Activated B cell treated with CpG ODN at 0.5 μM for 24 hours (primary cell): ENCODE measurements at regions of chr12 and their contacts with region 1.

Region 1: DNA sequence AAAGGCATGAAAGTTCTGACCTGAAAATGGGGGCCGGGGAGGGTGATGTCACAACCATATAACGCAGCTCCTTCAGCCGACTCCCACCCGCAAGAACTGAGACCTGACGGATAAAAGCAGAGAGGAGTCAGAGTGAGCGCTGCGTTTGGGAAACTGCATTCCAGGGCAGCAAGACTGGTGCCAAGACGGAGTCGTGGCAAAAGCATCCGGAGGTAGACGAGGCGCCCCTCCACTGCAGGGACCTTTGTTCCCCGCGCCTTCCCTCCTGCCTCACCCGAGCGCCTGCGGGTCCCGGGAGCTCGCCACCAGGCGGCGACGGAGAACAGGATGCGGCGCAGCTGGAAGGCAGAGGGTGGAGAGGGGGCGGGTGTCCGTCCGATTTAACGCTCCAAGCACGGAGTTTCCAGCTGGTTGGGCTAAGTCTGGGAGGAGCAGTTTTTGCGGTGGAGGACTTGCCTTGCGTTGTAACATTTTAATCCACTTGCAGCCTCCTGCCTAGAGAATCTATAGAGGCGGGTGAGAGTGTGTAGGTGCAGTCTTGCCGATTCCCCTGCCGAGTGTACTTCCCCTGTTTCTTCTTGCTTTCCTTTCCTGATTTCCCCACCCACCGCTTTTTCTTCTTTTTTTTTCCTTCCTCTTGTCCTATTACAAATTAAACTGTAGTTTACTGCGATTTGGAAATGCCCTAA is 1.2 kb upstream of the CPNE8 start:
- DNase-seq: peak; percentile 42
- ATAC-seq: peak; percentile 58
- H3K4me3 Mint-ChIP-seq: peak overlapping the region; percentile 88
- H3K27ac Mint-ChIP-seq: no peak overlapping the region
- H3K4me1 Mint-ChIP-seq: peaks cover 23% of the 10 kb centered on the region
- H3K27me3 Mint-ChIP-seq: peaks cover 24% of the 10 kb centered on the region
- CTCF ChIP-seq: no peak

Region 2: GRCh38 chr12:38664661-38665269 is 241.9 kb before region 1 on chr12:
- CTCF ChIA-PET with region 1: no interaction called
- POLR2A ChIA-PET with region 1: no interaction called
- intact Hi-C with region 1: loop called (anchors 5 kb)
- DNase-seq: no peak
- ATAC-seq: no peak
- H3K4me3 Mint-ChIP-seq: no peak overlapping the region
- H3K27ac Mint-ChIP-seq: no peak overlapping the region
- H3K4me1 Mint-ChIP-seq: no peaks in the 10 kb centered on the region
- H3K27me3 Mint-ChIP-seq: no peaks in the 10 kb centered on the region
- CTCF ChIP-seq: no peak

Region 3: GRCh38 chr12:38838056-38838850 is 68.4 kb before region 1 on chr12:
- CTCF ChIA-PET with region 1: no interaction called
- POLR2A ChIA-PET with region 1: no interaction called
- intact Hi-C with region 1: no loop called
- DNase-seq: no peak
- ATAC-seq: no peak
- H3K4me3 Mint-ChIP-seq: no peak overlapping the region
- H3K27ac Mint-ChIP-seq: no peak overlapping the region
- H3K4me1 Mint-ChIP-seq: no peaks in the 10 kb centered on the region
- H3K27me3 Mint-ChIP-seq: no peaks in the 10 kb centered on the region
- CTCF ChIP-seq: no peak

Region 4: DNA sequence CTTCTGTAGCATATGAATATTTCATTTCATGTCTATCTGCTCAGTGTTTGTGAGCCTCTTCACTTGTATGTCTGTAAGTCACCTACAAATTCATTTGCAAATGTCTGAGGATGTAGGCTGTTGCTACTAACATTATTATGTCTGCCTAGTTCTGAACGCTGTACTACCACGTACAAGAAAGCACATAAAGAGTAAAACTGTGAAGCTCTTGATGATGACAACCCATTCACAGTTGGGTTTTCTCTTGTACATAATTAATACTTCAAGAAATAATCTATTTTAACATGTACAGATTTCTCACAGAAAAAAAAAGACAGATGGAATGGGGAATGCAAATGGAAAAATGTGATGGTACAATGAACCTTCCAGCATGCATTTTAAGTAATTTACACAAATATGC is 63.1 kb after region 1 on chr12:
- CTCF ChIA-PET with region 1: no interaction called
- POLR2A ChIA-PET with region 1: no interaction called
- intact Hi-C with region 1: no loop called
- DNase-seq: no peak
- ATAC-seq: no peak
- H3K4me3 Mint-ChIP-seq: no peak overlapping the region
- H3K27ac Mint-ChIP-seq: no peak overlapping the region
- H3K4me1 Mint-ChIP-seq: no peaks in the 10 kb centered on the region
- H3K27me3 Mint-ChIP-seq: no peaks in the 10 kb centered on the region
- CTCF ChIP-seq: no peak